ENCODE measurements at regions of chr20 and their contacts with region 1.

Region 1: GRCh38 chr20:47677635-47678453 is 107.4 kb downstream of the SULF2 start:
- DNase-seq: peak; percentile 69 to 85 (median 78)
- ATAC-seq: peak; percentile 93
- H3K4me3 ChIP-seq: no peak overlapping the region
- H3K27ac ChIP-seq: no peak overlapping the region
- H3K4me1 ChIP-seq: peaks cover 0 to 13% of the 10 kb centered on the region in 2 experiments; a peak in 2 of 5 replicates
- H3K27me3 ChIP-seq: peaks cover 29 to 84% of the 10 kb centered on the region in 2 experiments; a peak in 4 of 5 replicates
- CTCF ChIP-seq: peak; percentile 83 to 91 (median 87)
- EP300 ChIP-seq: no peak
- POLR2A ChIP-seq: no peak
- RAD21 ChIP-seq: peak; percentile 60 to 88

Region 2: GRCh38 chr20:47713878-47714450 is 36.1 kb after region 1 on chr20:
- CTCF ChIA-PET with region 1: interaction called, 5 read pairs
- POLR2A ChIA-PET with region 1: interaction called, 3 read pairs
- in situ Hi-C with region 1: no loop called
- intact Hi-C with region 1: loop called (anchors 2 kb)
- DNase-seq: no peak
- ATAC-seq: no peak
- H3K4me3 ChIP-seq: no peak overlapping the region
- H3K27ac ChIP-seq: no peak overlapping the region
- H3K4me1 ChIP-seq: no peaks in the 10 kb centered on the region
- H3K27me3 ChIP-seq: peaks cover 40 to 72% of the 10 kb centered on the region in 2 experiments
- CTCF ChIP-seq: no peak
- EP300 ChIP-seq: no peak
- POLR2A ChIP-seq: no peak
- RAD21 ChIP-seq: no peak

Region 3: DNA sequence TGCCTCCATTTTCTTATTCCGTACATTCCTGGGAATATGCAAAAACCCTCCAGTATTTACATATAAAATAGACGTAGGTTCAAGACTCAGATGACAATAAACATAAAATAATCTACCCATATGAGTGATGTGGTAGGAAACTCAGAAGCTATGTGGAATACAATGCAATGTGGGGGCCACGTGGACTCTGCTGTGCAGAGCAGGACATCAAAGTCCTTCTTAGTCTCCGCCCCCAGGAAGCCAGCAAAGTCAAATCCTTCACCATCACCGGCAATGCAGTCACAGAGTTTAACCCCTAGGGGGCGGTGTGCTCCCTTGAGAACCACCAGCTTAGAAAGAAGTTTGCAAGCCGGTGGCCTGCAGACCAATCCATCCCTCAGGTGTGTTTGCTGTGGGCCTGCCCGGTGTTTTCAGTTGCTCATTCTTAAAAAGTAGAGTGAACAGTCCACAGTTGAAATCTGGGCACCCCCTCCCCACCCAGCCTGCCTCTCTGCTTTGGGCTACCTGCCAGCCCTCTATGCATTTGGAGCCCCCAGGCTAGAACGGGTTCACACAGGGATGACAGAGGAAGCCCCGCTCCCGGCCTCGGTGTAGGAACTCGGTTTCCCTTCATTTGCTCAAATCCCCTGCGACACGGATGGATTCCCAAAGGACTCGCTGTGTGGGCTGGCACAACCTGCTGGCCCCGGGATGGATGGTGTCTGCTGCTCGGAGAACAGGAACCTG is 47.6 kb after region 1 on chr20:
- CTCF ChIA-PET with region 1: no interaction called
- POLR2A ChIA-PET with region 1: no interaction called
- in situ Hi-C with region 1: no loop called
- intact Hi-C with region 1: loop called (anchors 5 kb)
- DNase-seq: peak; percentile 85 to 89 (median 88)
- ATAC-seq: peak; percentile 98
- H3K4me3 ChIP-seq: no peak overlapping the region
- H3K27ac ChIP-seq: no peak overlapping the region
- H3K4me1 ChIP-seq: 0 out of 5 replicates have a peak, but pooled peaks cover 0 to 6% of the 10 kb centered on the region in 2 experiments
- H3K27me3 ChIP-seq: peaks cover 16 to 45% of the 10 kb centered on the region in 2 experiments; a peak in 4 of 5 replicates
- CTCF ChIP-seq: peak; percentile 84 to 94 (median 94)
- EP300 ChIP-seq: no peak
- POLR2A ChIP-seq: no peak
- RAD21 ChIP-seq: peak; percentile 65 to 80

Region 4: DNA sequence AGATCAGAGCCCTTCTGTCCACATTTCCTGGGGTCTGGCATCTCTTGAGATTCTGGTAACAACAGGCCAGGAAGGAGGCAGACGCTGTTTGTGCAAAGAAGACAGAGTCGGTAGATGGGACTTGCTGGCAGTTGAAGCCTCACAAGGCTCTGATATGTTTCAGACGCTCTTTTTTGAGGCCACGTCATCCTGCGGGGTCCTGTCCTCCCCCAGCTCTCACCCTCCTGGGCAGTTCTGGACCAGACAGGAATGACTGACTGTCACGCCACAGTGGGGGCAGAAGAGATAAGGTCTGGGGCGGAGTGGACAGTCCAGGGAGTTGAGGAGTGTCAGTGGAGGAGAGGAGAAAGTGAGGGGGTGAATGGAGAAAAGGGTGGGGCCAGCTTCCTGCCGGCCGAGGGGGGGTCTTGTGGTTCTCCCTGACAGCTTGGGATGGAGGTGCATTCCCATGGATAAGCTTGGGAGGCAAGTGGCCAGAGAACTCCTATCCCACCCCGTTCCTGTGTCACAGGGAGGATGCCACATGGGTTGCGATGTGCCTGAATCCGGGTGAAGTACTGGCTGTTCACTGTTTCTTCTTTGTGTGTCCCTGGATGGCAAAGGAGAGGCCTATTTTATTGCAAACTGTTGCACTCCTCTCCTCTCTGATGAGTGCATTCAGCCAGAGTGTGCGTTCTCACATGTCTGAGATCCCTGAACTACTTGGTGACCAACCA is 194.7 kb after region 1 on chr20:
- CTCF ChIA-PET with region 1: no interaction called
- POLR2A ChIA-PET with region 1: no interaction called
- in situ Hi-C with region 1: no loop called
- intact Hi-C with region 1: no loop called
- DNase-seq: peak in 1 of 4 experiments; percentile 30
- ATAC-seq: no peak
- H3K4me3 ChIP-seq: no peak overlapping the region
- H3K27ac ChIP-seq: no peak overlapping the region
- H3K4me1 ChIP-seq: no peaks in the 10 kb centered on the region
- H3K27me3 ChIP-seq: peaks cover 15 to 31% of the 10 kb centered on the region in 2 experiments; a peak in 4 of 5 replicates
- CTCF ChIP-seq: no peak
- EP300 ChIP-seq: no peak
- POLR2A ChIP-seq: no peak
- RAD21 ChIP-seq: no peak

Measured in K562 (cell line).